ENCODE measurements at regions of chr5 and their contacts with region 1.

Region 1: DNA sequence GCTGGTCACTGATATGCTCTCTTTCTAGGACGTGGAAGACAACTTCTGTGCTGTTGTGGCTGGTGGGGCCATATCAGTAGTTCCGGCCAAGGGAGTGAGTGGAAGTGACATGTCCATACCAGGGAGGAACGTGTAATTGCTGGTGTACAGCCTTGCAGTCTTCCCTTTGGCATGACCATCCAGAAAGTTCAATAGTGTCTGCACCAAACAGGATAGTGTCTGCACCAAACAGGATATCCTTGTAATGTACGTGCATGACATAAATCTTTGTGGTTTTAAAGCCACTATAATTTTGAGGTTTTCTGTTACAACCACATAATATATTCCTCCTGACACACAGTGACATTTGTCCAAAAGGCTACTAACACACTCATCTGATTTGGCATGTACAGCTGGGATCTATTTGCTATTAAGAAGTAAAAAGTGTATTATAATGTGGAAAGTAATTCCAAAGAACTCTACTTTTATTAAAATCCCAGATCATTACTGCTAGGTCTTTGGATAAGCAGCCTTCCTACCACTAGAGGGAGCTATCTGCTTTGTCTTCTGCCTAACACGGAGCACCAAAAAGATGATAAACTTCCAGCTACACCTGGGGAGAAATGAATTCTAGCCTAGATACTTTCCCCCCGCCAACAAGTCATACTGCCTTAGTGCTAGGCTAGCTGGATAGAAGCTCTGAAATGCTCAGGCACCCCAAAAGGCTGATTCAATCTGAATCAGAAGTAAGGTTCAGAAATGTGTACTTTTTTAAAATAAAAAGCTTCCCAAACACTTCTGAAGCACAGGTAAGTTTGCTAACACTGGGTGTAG is 52.7 kb downstream of the RNF145 start:
- DNase-seq: peak; percentile 57
- ATAC-seq: peak; percentile 89
- H3K4me3 ChIP-seq: no peak overlapping the region
- H3K27ac ChIP-seq: no peak overlapping the region
- H3K4me1 ChIP-seq: no peaks in the 10 kb centered on the region
- H3K27me3 ChIP-seq: no peaks in the 10 kb centered on the region
- CTCF ChIP-seq: peak; percentile 68 to 94 (median 74); a peak in 5 of 6 replicates
- POLR2A ChIP-seq: no peak
- RAD21 ChIP-seq: peak; percentile 88

Region 2: GRCh38 chr5:158658446-158659230 is 498.0 kb before region 1 on chr5:
- CTCF ChIA-PET with region 1: no interaction called
- POLR2A ChIA-PET with region 1: no interaction called
- RAD21 ChIA-PET with region 1: no interaction called
- intact Hi-C with region 1: no loop called
- DNase-seq: no peak
- ATAC-seq: no peak
- H3K4me3 ChIP-seq: no peak overlapping the region
- H3K27ac ChIP-seq: no peak overlapping the region
- H3K4me1 ChIP-seq: no peaks in the 10 kb centered on the region
- H3K27me3 ChIP-seq: no peaks in the 10 kb centered on the region; the same call in 1 of the 2 replicates
- CTCF ChIP-seq: no peak
- POLR2A ChIP-seq: no peak
- RAD21 ChIP-seq: no peak

Region 3: DNA sequence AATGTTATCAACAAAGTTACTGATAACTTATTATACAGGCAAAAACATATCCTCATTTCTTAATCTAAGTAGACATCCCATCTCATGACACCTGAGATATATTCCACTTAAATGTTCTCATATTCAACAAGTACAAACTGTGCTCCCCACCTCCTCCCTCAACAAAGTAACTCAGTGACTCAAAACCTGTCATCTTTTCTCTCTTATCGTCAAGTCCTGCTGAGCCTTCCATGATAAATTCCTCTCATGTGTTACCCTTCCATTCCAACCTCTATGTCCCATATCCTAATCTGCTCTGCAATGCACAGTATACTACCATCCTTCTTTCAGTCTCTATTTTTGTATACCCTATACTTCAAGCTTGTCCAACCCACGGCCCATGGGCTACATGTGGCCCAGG is 39.1 kb after region 1 on chr5:
- CTCF ChIA-PET with region 1: no interaction called
- POLR2A ChIA-PET with region 1: no interaction called
- RAD21 ChIA-PET with region 1: no interaction called
- intact Hi-C with region 1: no loop called
- DNase-seq: no peak
- ATAC-seq: no peak
- H3K4me3 ChIP-seq: no peak overlapping the region
- H3K27ac ChIP-seq: no peak overlapping the region
- H3K4me1 ChIP-seq: no peaks in the 10 kb centered on the region
- H3K27me3 ChIP-seq: no peaks in the 10 kb centered on the region
- CTCF ChIP-seq: no peak
- POLR2A ChIP-seq: no peak
- RAD21 ChIP-seq: no peak

Region 4: DNA sequence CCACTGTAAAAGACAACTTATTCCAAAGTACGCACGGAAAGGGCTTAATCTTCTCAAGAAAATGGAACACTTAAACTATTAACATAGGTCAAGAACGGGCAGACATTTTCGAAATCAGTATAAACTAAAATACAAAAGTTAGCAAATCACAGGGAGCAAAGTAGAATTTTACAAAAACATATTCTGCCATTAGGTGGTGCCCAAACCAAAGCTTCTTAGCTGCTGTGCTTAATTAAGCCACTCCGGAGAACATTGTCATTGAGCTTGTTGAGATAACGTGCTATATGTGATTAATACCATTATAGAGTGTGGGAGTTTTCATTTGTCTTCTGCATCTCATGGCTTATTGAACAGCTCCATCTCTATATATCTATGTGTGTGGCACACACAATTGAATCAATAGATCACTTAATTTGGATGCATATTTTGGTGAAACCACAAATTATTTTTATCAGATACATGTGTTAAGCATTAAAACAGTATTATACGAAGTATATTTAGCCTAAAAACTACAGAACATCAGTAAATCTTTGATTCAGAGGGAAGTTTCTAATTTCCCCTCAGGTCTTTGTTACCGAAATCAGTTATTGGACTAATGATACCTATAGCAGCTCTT is 129.9 kb after region 1 on chr5:
- CTCF ChIA-PET with region 1: interaction called, 11 read pairs
- POLR2A ChIA-PET with region 1: no interaction called
- RAD21 ChIA-PET with region 1: no interaction called
- intact Hi-C with region 1: no loop called
- DNase-seq: no peak
- ATAC-seq: peak; percentile 50; the same call in 1 of the 2 replicates
- H3K4me3 ChIP-seq: no peak overlapping the region
- H3K27ac ChIP-seq: no peak overlapping the region
- H3K4me1 ChIP-seq: no peaks in the 10 kb centered on the region
- H3K27me3 ChIP-seq: no peaks in the 10 kb centered on the region
- CTCF ChIP-seq: peak; percentile 35 to 56 (median 46); a peak in 4 of 6 replicates
- POLR2A ChIP-seq: no peak
- RAD21 ChIP-seq: peak; percentile 75

Region 5: DNA sequence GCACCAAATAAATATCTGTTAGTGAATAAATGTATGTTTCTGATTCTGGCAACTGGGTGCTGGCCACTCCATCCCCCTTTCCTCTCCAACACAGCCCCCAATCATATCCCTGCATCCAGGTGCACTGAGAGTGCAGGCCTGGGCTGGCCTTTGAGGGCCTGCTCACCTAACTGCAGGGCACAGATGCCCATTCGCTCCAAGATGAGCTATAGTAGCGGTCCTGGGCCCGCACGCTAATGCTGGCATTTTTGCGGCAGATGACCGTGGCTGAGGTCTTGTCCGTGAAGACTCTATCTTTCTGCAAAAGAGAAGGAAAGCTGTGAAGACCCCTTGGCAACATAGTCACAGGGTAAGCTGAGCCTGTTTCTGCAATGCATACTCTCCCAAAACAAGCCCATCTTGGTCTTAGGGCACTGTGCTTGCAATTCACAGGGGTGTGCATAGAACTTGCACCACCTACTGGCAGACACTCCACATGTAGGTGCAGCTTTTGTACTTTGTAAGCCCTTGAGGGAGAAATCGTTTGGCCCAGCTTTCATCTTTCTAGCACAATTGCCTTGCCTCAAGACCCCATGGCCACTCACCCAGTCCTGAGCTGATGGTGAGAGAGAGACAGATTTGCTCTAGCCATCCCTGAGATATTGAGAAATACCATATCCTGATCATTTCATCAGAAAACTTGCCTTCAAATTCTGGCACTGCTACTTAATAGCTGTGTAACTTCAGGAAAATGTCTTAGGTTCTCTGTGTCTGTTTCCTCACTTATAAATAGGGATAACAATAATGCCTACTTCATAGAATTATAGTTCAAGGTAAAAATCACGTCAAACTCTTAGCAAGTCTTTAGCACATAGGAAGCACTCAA is 160.1 kb after region 1 on chr5:
- CTCF ChIA-PET with region 1: interaction called, 108 read pairs
- POLR2A ChIA-PET with region 1: interaction called, 3 read pairs
- RAD21 ChIA-PET with region 1: interaction called, 14 to 15 read pairs
- intact Hi-C with region 1: loop called (anchors 1 kb)
- DNase-seq: no peak
- ATAC-seq: peak; percentile 95
- H3K4me3 ChIP-seq: no peak overlapping the region
- H3K27ac ChIP-seq: no peak overlapping the region
- H3K4me1 ChIP-seq: no peaks in the 10 kb centered on the region
- H3K27me3 ChIP-seq: no peaks in the 10 kb centered on the region
- CTCF ChIP-seq: peak; percentile 69 to 82 (median 73)
- POLR2A ChIP-seq: no peak
- RAD21 ChIP-seq: peak; percentile 80

Region 6: DNA sequence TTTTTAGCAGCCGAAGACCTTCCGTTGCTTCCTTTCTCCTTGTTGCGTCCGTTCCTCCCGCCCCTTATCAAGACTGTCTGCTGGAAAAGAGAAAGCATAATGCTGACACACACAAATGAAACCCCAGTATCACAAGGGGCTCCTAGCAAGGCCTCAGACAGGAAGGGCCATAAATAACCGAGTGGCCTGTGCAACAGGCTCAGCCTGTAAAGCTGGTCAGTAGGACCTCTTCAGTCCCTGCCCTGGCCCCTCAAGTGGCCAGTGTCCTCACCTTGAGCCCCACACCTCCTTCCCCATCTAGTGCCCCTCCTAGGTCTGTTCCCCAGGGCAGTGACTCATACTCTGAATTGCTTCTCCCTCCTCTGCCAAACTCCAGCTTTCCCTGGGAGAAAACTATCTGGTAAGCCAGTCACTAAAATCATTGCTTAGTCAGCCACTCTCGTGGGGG is 348.2 kb after region 1 on chr5:
- CTCF ChIA-PET with region 1: no interaction called
- POLR2A ChIA-PET with region 1: no interaction called
- RAD21 ChIA-PET with region 1: no interaction called
- intact Hi-C with region 1: loop called (anchors 10 kb)
- DNase-seq: no peak
- ATAC-seq: peak; percentile 46; the same call in 1 of the 2 replicates
- H3K4me3 ChIP-seq: no peak overlapping the region
- H3K27ac ChIP-seq: no peak overlapping the region
- H3K4me1 ChIP-seq: peaks cover 6 to 12% of the 10 kb centered on the region in 2 experiments
- H3K27me3 ChIP-seq: no peaks in the 10 kb centered on the region
- CTCF ChIP-seq: no peak
- POLR2A ChIP-seq: no peak
- RAD21 ChIP-seq: 0 out of 2 replicates have a peak, but pooled peaks have one; percentile 6